ENCODE measurements at regions of chr17 and their contacts with region 1.

Region 1: DNA sequence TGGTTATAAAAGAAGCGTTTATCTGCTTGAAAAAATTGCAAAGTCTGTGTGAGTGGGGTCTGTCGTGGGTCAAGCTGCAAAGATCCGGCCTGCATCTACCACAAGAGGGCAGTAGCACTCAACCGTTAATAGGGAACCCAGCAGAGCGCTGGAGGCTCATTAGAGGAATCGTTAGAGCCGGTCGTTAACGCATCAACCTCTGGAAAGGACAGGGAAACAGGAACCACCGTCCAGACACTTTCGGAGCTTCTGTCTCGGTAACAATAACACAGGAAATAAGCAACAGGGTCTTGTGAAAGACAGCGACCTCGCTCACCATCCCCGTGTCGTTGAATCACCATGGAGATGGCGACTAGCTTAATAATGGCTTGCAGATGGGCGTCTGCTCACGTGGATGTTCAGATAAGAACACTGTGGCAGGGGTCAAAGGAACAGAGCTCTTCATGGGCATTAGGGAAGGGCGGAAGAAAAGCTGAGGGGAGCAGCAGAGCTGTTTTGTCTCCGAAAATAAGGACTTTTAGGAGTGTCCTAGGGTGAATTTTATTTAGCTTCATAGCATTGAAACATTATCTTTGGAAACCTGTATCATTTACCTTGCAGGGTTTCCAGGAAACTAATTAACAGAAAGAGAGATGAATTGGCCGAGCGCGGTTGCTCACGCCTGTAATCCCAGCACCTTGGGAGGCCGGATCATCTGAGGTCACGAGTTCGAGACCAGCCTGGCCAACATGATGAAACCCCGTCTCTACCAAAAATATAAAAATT is 11.9 kb upstream of the NSRP1 start:
- DNase-seq: peak; percentile 51 to 60
- ATAC-seq: peak; percentile 86 to 94
- H3K4me3 ChIP-seq: peak overlapping the region; percentile 30 to 46 (median 42)
- H3K27ac ChIP-seq: no peak overlapping the region
- H3K4me1 ChIP-seq: no peaks in the 10 kb centered on the region
- H3K27me3 ChIP-seq: no peaks in the 10 kb centered on the region
- CTCF ChIP-seq: peak; percentile 50 to 88 (median 71)
- POLR2A ChIP-seq: no peak

Region 2: GRCh38 chr17:30236766-30237165 is 132.0 kb after region 1 on chr17:
- in situ Hi-C with region 1: no loop called
- intact Hi-C with region 1: loop called (anchors 10 kb)
- DNase-seq: no peak
- ATAC-seq: no peak
- H3K4me3 ChIP-seq: peak overlapping the region in 1 of 4 donors; percentile 52
- H3K27ac ChIP-seq: no peak overlapping the region
- H3K4me1 ChIP-seq: peaks cover 14% of the 10 kb centered on the region in 2 donors
- H3K27me3 ChIP-seq: peaks cover 47 to 55% (median 48%) of the 10 kb centered on the region in 3 donors
- CTCF ChIP-seq: peak in 2 of 5 experiments; percentile 21 to 36
- POLR2A ChIP-seq: no peak

Region 3: GRCh38 chr17:30278032-30278431 is 173.3 kb after region 1 on chr17:
- in situ Hi-C with region 1: loop called in 2 of 4 experiments (anchors 10 to 25 kb)
- intact Hi-C with region 1: loop called (anchors 1 kb)
- DNase-seq: no peak
- ATAC-seq: peak in 1 of 2 donors; percentile 51
- H3K4me3 ChIP-seq: no peak overlapping the region
- H3K27ac ChIP-seq: no peak overlapping the region
- H3K4me1 ChIP-seq: no peaks in the 10 kb centered on the region
- H3K27me3 ChIP-seq: no peaks in the 10 kb centered on the region
- CTCF ChIP-seq: peak in 3 of 5 experiments; percentile 26 to 50 (median 42)
- POLR2A ChIP-seq: no peak

Region 4: GRCh38 chr17:30336369-30337171 is 231.8 kb after region 1 on chr17:
- in situ Hi-C with region 1: no loop called
- intact Hi-C with region 1: loop called (anchors 10 kb)
- DNase-seq: no peak
- ATAC-seq: no peak
- H3K4me3 ChIP-seq: no peak overlapping the region
- H3K27ac ChIP-seq: no peak overlapping the region
- H3K4me1 ChIP-seq: peaks cover 0 to 3% of the 10 kb centered on the region in 2 donors
- H3K27me3 ChIP-seq: no peaks in the 10 kb centered on the region
- CTCF ChIP-seq: peak in 4 of 5 experiments; percentile 36 to 51 (median 38)
- POLR2A ChIP-seq: no peak

Measured in gastrocnemius medialis (tissue), 4 donors.